Naive thymus-derived CD4-positive, alpha-beta T cell (primary cell): ENCODE measurements at regions of chr11 and their contacts with region 1.

Region 1: DNA sequence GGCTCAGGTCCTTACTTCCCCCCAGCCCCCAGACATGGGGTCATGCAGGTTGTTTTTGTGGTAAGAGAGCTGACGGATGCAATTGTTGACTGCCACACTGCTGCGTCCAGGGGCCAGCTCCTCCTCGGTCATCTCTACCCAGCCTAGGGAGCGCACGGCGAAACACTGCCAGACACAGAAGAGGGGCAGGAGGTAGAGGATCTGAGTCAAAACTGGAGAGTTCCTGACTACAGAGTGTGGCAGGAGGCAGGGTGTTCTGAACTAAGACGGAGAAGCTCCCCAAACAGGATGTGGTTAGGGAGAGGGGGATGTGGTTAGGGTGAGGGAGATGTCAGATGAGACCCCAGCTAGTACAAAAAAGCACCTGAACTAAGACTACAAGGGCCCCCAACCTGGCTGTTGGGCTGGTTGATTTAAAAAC is 12.3 kb downstream of the SMPD1 start:
- DNase-seq: peak in 8 of 9 donors; percentile 69 to 99 (median 97)
- ATAC-seq: peak; percentile 92
- H3K4me3 ChIP-seq: peak overlapping the region; percentile 52
- H3K4me3 Mint-ChIP-seq: peak overlapping the region; percentile 74 to 94 (median 90)
- H3K27ac ChIP-seq: peak overlapping the region; percentile 80
- H3K27ac Mint-ChIP-seq: peak overlapping the region; percentile 94 to 100 (median 97)
- H3K4me1 ChIP-seq: peaks cover 53 to 83% of the 10 kb centered on the region in 2 donors
- H3K4me1 Mint-ChIP-seq: peaks cover 63 to 100% (median 87%) of the 10 kb centered on the region in 7 donors
- H3K27me3 ChIP-seq: no peaks in the 10 kb centered on the region
- H3K27me3 Mint-ChIP-seq: peaks cover 0 to 5% (median 0%) of the 10 kb centered on the region in 5 donors

Region 2: GRCh38 chr11:6413791-6414201 is 11.2 kb after region 1 on chr11:
- CTCF ChIA-PET with region 1: interaction called, 30 read pairs
- POLR2A ChIA-PET with region 1: interaction called, 525 read pairs
- intact Hi-C with region 1: loop called (anchors 1 kb)
- DNase-seq: peak in 7 of 9 donors; percentile 78 to 91 (median 88)
- ATAC-seq: peak; percentile 90
- H3K4me3 ChIP-seq: peak overlapping the region; percentile 28
- H3K4me3 Mint-ChIP-seq: no peak overlapping the region
- H3K27ac ChIP-seq: peak overlapping the region; percentile 74
- H3K27ac Mint-ChIP-seq: no peak overlapping the region
- H3K4me1 ChIP-seq: peaks cover 31 to 81% of the 10 kb centered on the region in 2 donors
- H3K4me1 Mint-ChIP-seq: peaks cover 0 to 36% (median 17%) of the 10 kb centered on the region in 7 donors
- H3K27me3 ChIP-seq: no peaks in the 10 kb centered on the region
- H3K27me3 Mint-ChIP-seq: no peaks in the 10 kb centered on the region

Region 3: DNA sequence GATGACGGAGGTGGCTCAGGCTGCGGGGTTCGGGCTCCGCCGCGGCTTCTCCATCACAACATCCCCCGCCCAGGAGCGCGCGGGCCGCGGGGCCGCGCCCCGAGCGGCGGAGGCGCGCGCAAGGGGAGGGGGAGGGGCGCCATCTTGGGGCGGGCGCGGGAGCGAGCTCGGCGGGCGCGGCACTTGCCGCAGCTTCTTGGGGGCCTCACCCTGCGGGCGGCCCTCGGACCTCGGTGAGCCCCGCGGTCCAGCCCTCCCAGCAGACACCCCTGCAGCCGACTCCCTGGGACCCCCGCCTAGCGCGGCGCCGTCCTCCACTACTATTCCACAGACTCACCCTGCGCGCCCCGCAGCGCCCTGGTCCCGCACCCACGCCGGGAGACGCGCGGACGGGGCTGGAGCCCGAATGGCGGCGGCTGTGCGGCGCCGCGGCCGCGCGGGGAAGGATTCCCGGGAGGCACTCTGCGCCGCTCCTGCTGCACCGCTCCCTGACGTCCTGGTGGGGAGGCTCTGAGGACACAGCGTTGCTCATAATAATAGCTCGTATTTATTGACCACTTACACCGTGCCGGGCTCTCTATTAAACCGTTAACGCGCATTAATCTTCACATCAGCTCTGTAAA is 16.5 kb after region 1 on chr11 and contains the start of gene APBB1:
- CTCF ChIA-PET with region 1: interaction called, 30 read pairs
- POLR2A ChIA-PET with region 1: interaction called, 525 read pairs
- intact Hi-C with region 1: loop called (anchors 1 kb)
- DNase-seq: peak; percentile 71 to 87 (median 81)
- ATAC-seq: peak; percentile 89
- H3K4me3 ChIP-seq: peak within 1 kb of the TSS; percentile 79
- H3K4me3 Mint-ChIP-seq: peak within 1 kb of the TSS in 7 of 10 donors; percentile 78 to 92 (median 85)
- H3K27ac ChIP-seq: peak within 1 kb of the TSS; percentile 92
- H3K27ac Mint-ChIP-seq: peak within 1 kb of the TSS; percentile 47 to 92 (median 89)
- H3K4me1 ChIP-seq: peaks cover 27 to 46% of the 10 kb centered on the region in 2 donors
- H3K4me1 Mint-ChIP-seq: peaks cover 2 to 18% (median 14%) of the 10 kb centered on the region in 7 donors
- H3K27me3 ChIP-seq: no peaks in the 10 kb centered on the region
- H3K27me3 Mint-ChIP-seq: peaks cover 0 to 36% (median 11%) of the 10 kb centered on the region in 5 donors
- total RNA-seq, gene APBB1: 46.9 to 188 (median 154) TPM

Region 4: GRCh38 chr11:6431861-6432260 is 29.3 kb after region 1 on chr11:
- CTCF ChIA-PET with region 1: interaction called, 86 read pairs
- POLR2A ChIA-PET with region 1: interaction called, 14 read pairs
- intact Hi-C with region 1: no loop called
- DNase-seq: no peak
- ATAC-seq: no peak
- H3K4me3 ChIP-seq: no peak overlapping the region
- H3K4me3 Mint-ChIP-seq: no peak overlapping the region
- H3K27ac ChIP-seq: no peak overlapping the region
- H3K27ac Mint-ChIP-seq: no peak overlapping the region
- H3K4me1 ChIP-seq: no peaks in the 10 kb centered on the region
- H3K4me1 Mint-ChIP-seq: peaks cover 4 to 20% (median 6%) of the 10 kb centered on the region in 7 donors
- H3K27me3 ChIP-seq: no peaks in the 10 kb centered on the region
- H3K27me3 Mint-ChIP-seq: peaks cover 0 to 16% (median 0%) of the 10 kb centered on the region in 5 donors